Breast epithelium (tissue), 4 donors: ENCODE measurements at regions of chr20 and their contacts with region 1.

Region 1: DNA sequence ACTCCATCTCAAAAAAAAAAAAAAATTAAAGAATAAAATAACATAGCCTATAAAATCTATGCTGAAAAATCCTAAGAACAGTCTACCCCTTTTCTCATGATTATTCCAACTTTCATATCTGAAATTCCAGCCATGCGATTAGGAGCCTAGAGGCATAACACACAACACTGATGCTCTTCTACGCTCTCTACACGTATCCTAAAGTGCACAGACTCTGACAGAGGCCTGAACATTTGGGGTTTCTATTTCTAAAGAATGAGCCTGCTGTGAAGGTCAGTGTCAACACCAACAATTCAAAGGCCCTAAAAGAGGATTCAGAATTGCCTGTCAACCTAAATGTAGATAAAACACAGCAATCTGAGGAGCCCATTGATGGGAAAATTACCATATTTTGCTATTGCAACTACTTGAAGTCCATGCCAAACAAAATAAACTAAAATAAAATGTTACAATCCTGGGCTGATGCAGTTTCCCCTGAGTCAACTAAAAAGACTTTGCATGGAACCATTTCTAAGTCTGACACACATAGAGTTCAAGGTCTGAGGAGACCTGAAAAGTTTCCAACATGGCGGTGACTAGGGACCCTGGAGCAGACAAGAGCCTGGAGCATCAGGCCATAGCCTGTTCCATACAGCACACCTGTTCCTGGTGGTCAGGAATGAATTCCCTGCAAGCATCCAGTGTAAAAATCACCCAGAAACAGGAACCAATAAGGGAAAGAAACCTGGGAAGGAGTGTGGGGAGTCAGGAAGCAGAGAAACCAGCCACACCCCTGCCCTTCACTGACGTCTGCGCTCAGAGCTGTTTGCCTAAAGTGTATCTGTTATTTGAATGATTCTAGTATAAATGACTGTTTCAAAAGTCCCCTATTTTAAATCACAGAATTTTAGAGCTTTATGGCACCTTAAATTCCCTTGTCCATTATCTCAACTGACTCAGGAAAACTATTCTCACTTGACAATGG is 11.8 kb downstream of the NINL start:
- DNase-seq: no peak
- H3K4me3 ChIP-seq: no peak overlapping the region
- H3K27ac ChIP-seq: no peak overlapping the region
- H3K4me1 ChIP-seq: no peaks in the 10 kb centered on the region
- H3K27me3 ChIP-seq: no peaks in the 10 kb centered on the region
- CTCF ChIP-seq: no peak
- POLR2A ChIP-seq: no peak

Region 2: DNA sequence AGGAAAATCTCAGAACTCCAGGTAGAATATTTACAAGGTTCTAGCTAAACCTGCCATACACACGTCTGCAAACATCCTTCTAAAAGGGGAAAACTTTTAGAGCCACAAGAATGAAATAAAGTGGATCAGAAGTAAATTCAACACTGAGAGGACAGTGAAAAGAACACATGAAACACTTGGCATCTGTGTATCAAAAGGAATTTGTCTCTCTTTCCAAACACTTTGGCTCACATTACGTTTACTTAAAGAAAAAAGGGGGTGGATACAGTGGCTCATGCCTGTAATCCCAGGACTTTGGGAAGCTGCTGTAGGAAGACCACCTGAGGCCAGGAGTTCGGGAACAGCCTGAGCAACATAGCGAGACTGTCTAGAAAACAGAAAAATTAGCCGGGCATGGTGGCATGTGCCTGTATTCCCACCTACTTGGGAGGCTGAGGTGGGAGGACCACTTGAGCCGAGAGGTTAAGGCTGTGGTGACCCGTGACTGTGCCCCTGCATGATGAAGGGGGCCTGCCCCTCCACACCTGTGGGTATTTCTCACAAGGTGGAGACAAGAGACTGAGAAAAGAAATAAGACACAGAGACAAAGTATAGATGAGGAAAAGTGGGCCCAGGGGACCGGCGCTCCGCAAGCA is 23.6 kb before region 1 on chr20:
- intact Hi-C with region 1: loop called (anchors 1 kb)
- DNase-seq: no peak
- H3K4me3 ChIP-seq: no peak overlapping the region
- H3K27ac ChIP-seq: no peak overlapping the region
- H3K4me1 ChIP-seq: peaks cover 0 to 6% of the 10 kb centered on the region in 2 donors
- H3K27me3 ChIP-seq: no peaks in the 10 kb centered on the region
- CTCF ChIP-seq: no peak
- POLR2A ChIP-seq: no peak

Region 3: DNA sequence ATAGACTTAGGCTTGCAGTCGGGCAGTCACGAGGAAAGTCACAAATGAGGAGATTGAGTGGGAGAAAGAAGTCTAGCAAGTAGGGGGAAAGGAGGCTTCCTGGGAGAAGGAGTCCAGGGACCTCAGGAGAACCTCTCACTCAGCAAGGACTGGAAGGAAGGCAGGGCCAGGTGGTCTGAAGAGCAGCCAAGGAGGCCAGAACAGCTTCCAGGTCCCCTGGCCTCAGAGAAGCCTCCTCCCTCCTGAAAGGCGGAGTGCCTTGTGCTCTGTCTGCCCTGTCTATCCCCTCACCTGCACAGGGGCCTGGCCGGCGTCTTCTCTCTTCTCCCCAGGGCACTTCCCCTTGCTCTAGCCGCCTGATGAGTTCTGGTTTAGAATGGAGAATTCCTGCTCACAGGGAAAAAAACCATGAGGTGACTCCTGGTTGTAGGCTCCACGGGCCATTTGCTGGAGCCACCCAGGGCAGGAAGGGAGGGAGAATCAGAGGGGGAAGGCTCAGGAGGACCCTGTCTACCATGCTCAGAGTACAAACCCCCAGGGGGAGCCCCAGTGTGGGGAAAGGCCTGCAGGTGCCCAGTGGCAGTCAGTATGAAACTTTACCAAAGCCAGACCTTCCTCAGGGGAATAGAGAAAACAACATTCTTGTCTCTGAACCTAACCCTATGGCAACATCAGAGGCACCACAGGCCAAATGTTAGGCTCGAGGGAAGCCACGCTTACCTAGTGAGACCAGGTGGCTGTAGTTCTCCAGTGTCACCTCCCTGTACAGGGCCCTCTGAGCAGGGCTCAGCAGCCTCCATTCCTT is 111.9 kb after region 1 on chr20:
- intact Hi-C with region 1: no loop called
- DNase-seq: no peak
- H3K4me3 ChIP-seq: no peak overlapping the region
- H3K27ac ChIP-seq: no peak overlapping the region
- H3K4me1 ChIP-seq: no peaks in the 10 kb centered on the region
- H3K27me3 ChIP-seq: no peaks in the 10 kb centered on the region
- CTCF ChIP-seq: no peak
- POLR2A ChIP-seq: no peak

Region 4: GRCh38 chr20:25696384-25697131 is 123.0 kb after region 1 on chr20 and contains the start of gene ZNF337:
- intact Hi-C with region 1: no loop called
- DNase-seq: peak; percentile 88 to 90
- H3K4me3 ChIP-seq: peak within 1 kb of the TSS; percentile 86 to 88 (median 86)
- H3K27ac ChIP-seq: peak within 1 kb of the TSS; percentile 91 to 93
- H3K4me1 ChIP-seq: no peaks in the 10 kb centered on the region
- H3K27me3 ChIP-seq: no peaks in the 10 kb centered on the region
- CTCF ChIP-seq: no peak
- POLR2A ChIP-seq: no peak
- total RNA-seq, gene ZNF337: 16.3 to 25.9 (median 20.0) TPM

Region 5: GRCh38 chr20:26208296-26209091 is 634.9 kb after region 1 on chr20:
- intact Hi-C with region 1: no loop called
- DNase-seq: peak in 1 of 2 donors; percentile 48
- H3K4me3 ChIP-seq: peak overlapping the region; percentile 5 to 62 (median 35)
- H3K27ac ChIP-seq: no peak overlapping the region
- H3K4me1 ChIP-seq: no peaks in the 10 kb centered on the region
- H3K27me3 ChIP-seq: peaks cover 5 to 33% of the 10 kb centered on the region in 2 donors
- CTCF ChIP-seq: no peak
- POLR2A ChIP-seq: no peak